Gastrocnemius medialis (tissue), 4 donors: ENCODE measurements at regions of chr2 and their contacts with region 1.

Region 1: DNA sequence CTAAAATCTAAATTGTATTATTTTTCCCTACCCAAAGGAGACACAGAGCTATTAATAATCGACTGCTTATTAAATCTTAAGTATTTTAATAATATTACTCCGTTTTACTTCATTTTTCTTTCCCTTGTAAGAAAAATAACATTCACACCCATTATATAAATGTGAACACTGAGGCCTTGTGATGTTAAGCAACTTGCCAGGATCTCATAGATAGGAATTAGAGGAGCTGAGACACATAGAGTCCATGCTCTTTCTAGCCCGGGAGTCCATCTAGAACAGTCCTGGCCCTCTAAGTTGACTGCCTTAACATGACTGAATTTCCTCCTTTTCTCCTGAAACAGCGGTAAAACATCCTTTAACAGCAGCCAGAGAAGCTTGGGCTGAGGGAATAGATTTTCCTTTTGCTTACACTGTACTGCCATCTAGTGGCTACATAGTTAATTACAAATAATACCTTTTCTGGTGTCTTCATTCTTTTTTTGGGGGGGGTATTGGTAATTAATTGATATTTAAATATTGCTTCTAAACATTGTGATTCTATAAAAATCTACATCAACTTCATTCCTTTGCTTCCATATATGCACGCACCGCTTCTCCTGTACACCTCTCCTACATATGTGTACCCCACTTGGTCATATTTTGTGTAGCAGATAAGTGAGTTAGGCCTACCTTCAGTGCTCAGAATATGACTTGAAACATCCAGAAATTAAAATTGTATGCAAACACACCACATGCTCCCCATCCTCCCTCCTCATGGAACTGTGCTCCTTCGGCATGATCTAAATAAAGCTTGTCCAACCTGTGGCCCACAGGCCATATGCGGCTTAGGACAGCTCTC is 125.8 kb upstream of the HNMT start:
- DNase-seq: no peak
- ATAC-seq: no peak
- H3K4me3 ChIP-seq: no peak overlapping the region
- H3K27ac ChIP-seq: no peak overlapping the region
- H3K4me1 ChIP-seq: no peaks in the 10 kb centered on the region
- H3K27me3 ChIP-seq: no peaks in the 10 kb centered on the region
- CTCF ChIP-seq: peak; percentile 19 to 65 (median 42)
- POLR2A ChIP-seq: no peak

Region 2: DNA sequence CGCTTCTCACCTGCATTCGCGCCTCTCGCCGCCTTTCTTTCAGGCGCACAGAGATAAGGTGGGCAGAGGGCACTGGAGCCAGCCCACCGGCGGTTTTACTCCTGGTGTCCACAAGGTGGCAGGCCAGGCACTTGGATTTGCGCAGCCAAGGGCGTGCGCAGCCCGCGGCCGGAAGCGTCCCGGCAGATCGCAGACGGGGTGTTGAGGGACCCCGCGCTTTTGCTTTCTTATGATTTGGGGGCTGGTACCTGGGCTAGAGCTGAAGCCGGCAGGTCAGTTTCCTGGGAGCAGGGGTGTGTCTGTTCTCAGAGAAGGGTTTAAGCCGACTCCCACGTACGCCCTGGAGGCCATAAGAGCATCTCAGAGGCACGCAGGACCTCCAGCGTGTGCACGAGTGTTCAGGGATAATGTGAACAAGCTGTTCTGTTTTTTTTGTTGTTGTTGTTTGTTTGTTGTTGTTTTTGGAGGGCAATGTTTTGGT is 1414.9 kb before region 1 on chr2:
- in situ Hi-C with region 1: loop called (anchors 25 kb)
- intact Hi-C with region 1: loop called (anchors 2 kb)
- DNase-seq: peak in 1 of 2 donors; percentile 15
- ATAC-seq: peak; percentile 63 to 74
- H3K4me3 ChIP-seq: peak overlapping the region; percentile 39 to 47 (median 41)
- H3K27ac ChIP-seq: no peak overlapping the region
- H3K4me1 ChIP-seq: no peaks in the 10 kb centered on the region
- H3K27me3 ChIP-seq: peaks cover 0 to 6% (median 5%) of the 10 kb centered on the region in 3 donors
- CTCF ChIP-seq: peak; percentile 35 to 76 (median 65)
- POLR2A ChIP-seq: no peak

Region 3: DNA sequence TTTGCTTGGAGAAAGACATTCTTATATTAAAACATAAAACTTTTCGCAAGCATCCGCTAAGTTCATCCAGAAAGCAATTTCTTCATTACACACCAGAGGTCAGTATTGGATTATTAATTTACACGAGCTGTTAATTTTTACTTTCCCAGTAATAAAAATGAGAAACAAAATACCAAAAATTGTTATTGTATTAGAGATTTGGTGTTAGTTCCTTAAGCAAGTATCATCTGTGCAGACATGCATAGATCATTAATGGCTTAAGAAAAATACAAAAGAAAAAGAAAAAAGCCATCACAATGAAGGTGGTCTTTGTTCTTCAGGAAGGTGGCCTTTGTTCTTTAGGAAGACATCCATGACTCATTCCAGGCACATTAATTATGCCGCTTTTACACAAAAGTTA is 72.2 kb after region 1 on chr2:
- in situ Hi-C with region 1: no loop called
- intact Hi-C with region 1: no loop called
- DNase-seq: no peak
- ATAC-seq: no peak
- H3K4me3 ChIP-seq: no peak overlapping the region
- H3K27ac ChIP-seq: no peak overlapping the region
- H3K4me1 ChIP-seq: no peaks in the 10 kb centered on the region
- H3K27me3 ChIP-seq: no peaks in the 10 kb centered on the region
- CTCF ChIP-seq: peak in 4 of 5 experiments; percentile 33 to 54 (median 46)
- POLR2A ChIP-seq: no peak